Dendritic cell treated with granulocyte-macrophage colony-stimulating factor and Interleukin-4, amounts not matched to agents 40 ng/mL and 50 ng/mL, for 4 days (primary cell): ENCODE measurements at regions of chr11 and their contacts with region 1.

Region 1: GRCh38 chr11:12281571-12282478 is 95.5 kb upstream of the PARVA start:
- H3K4me3 Mint-ChIP-seq: no peak overlapping the region
- H3K27ac Mint-ChIP-seq: no peak overlapping the region
- H3K4me1 Mint-ChIP-seq: peaks cover 5% of the 10 kb centered on the region
- H3K27me3 Mint-ChIP-seq: peaks cover 2% of the 10 kb centered on the region

Region 2: GRCh38 chr11:11931461-11932055 is 350.3 kb before region 1 on chr11:
- intact Hi-C with region 1: loop called (anchors 5 kb)
- H3K4me3 Mint-ChIP-seq: no peak overlapping the region
- H3K27ac Mint-ChIP-seq: no peak overlapping the region
- H3K4me1 Mint-ChIP-seq: peaks cover 3% of the 10 kb centered on the region
- H3K27me3 Mint-ChIP-seq: no peaks in the 10 kb centered on the region